H1 (cell line): ENCODE measurements at regions of chr13 and their contacts with region 1.

Region 1: DNA sequence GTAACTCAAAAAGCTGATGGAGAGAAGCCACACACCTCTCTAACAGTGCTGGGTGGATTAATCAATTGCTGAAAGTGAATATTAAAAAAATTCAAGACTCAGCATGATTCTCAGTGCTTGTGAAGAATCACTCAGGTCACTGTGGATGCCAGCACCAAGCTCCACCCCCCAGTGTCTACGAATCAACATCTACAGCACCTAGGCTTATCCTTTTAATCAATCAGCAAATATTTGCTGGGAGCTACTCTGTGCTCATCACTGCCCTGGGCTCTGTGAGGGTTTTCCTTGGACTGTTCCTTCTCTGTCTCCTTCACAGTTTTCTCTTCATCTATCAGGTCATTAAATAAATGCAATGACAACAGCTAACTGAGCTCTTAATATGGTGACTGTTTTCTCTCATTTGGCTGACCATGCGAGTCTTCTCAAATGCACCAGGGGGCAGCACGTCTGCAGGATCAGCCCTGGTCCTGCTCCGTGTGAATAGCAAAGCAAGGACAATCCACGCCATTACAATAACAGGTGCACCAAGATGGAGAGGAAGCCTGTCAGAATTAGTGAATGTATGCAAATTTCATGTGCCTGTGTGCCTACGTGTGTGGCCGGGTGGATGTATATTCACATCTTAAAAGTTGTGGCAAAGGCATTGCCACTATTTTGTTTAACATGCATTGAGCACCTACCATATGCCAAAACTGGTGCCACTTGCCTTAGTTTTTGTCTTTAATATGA is 14.6 kb upstream of the C13orf42 start:
- DNase-seq: peak; percentile 43 to 77
- H3K4me3 ChIP-seq: no peak overlapping the region
- H3K27ac ChIP-seq: no peak overlapping the region
- H3K4me1 ChIP-seq: peaks cover 0 to 19% (median 6%) of the 10 kb centered on the region in 4 experiments; a peak in 5 of 7 replicates
- H3K27me3 ChIP-seq: no peaks in the 10 kb centered on the region
- CTCF ChIP-seq: peak; percentile 85 to 96 (median 89)
- EP300 ChIP-seq: no peak
- POLR2A ChIP-seq: no peak
- RAD21 ChIP-seq: peak; percentile 94 to 95

Region 2: DNA sequence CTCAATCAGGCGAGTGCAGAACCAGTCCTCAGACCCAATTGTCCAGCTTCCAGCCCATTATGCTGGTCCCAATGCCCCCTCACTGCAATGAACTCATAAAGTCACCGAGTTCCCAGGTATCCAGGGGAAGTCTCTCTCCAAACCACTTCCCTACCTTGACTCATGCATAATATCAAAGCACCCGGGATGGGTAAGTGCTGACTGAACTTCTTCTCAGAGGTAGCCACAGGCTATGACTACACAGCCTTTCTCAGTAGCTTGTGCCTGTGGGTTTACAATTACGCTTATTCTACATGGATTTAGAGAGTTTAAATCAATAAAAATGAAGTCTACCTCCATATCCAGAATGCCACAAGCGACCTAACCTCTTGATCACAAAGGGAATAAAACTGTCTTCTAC is 12.9 kb before region 1 on chr13:
- CTCF ChIA-PET with region 1: interaction called, 24 read pairs
- POLR2A ChIA-PET with region 1: interaction called, 8 read pairs
- DNase-seq: no peak
- H3K4me3 ChIP-seq: no peak overlapping the region
- H3K27ac ChIP-seq: no peak overlapping the region
- H3K4me1 ChIP-seq: no peaks in the 10 kb centered on the region; a peak in 1 of 7 replicates
- H3K27me3 ChIP-seq: no peaks in the 10 kb centered on the region
- CTCF ChIP-seq: no peak
- EP300 ChIP-seq: no peak
- POLR2A ChIP-seq: no peak
- RAD21 ChIP-seq: no peak

Region 3: DNA sequence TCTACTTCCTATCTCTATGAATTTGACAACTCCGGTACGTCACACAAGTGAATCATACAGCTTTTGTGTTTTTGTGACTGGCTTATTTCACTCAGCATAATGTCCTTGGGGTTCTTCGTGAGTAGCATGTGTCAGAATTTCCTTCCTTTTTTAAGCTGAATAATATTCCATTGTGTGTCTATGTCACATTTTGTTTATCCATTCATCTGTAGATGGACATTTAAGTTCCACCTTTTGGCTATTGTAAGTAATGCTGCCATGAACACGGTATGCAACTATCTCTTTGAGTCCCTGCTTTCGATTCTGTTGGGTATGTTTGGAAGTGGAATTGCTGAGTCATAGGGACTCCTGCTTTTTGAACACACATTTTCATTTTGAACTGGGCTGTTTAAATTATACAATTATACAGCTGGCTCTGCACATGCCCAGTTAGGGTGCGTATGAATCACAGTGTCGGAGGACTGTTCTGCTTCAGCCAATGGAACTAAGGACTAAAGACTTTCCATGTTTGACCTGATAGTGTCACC is 28.4 kb after region 1 on chr13:
- CTCF ChIA-PET with region 1: interaction called, 102 read pairs
- POLR2A ChIA-PET with region 1: interaction called, 13 read pairs
- DNase-seq: peak in 1 of 2 experiments; percentile 31
- H3K4me3 ChIP-seq: no peak overlapping the region
- H3K27ac ChIP-seq: no peak overlapping the region
- H3K4me1 ChIP-seq: peaks cover 8 to 23% (median 18%) of the 10 kb centered on the region in 4 experiments; a peak in 6 of 7 replicates
- H3K27me3 ChIP-seq: no peaks in the 10 kb centered on the region
- CTCF ChIP-seq: no peak
- EP300 ChIP-seq: no peak
- POLR2A ChIP-seq: no peak
- RAD21 ChIP-seq: no peak

Region 4: DNA sequence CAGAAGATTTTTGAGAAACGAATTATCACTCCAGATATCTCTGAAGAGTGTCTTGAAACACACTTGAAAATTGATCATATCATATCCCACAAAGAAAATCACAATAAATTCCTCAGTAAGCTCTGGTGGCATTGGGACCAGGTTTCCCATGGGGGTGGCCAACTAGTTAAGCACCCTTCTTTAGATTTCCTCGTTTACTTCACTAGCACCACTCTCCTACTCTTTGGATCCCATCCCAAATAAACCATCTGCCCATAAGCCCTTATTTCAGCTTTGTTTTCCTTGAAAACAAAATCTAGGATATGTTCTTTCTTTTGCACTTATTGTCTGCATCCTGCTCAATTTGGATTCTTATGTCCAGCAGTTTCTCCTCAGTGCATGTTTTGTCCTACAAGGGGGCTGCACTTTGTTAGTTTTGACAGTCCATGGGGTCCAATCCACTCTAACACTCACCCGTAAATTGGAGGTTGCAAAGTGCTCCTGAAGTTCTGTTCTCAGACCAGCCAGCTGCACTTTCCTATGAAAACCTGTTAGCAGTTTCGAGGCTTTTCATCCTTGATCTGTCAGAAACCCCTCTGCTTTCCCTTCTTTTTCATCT is 56.2 kb after region 1 on chr13:
- CTCF ChIA-PET with region 1: interaction called, 11 read pairs
- POLR2A ChIA-PET with region 1: interaction called, 59 read pairs
- DNase-seq: no peak
- H3K4me3 ChIP-seq: no peak overlapping the region
- H3K27ac ChIP-seq: no peak overlapping the region
- H3K4me1 ChIP-seq: peaks cover 0 to 4% (median 1%) of the 10 kb centered on the region in 4 experiments; a peak in 2 of 7 replicates
- H3K27me3 ChIP-seq: no peaks in the 10 kb centered on the region
- CTCF ChIP-seq: no peak
- EP300 ChIP-seq: no peak
- POLR2A ChIP-seq: peak; percentile 6 to 45
- RAD21 ChIP-seq: no peak

Region 5: GRCh38 chr13:51230477-51231105 is 104.9 kb after region 1 on chr13:
- CTCF ChIA-PET with region 1: interaction called, 22 read pairs
- POLR2A ChIA-PET with region 1: no interaction called
- DNase-seq: no peak
- H3K4me3 ChIP-seq: no peak overlapping the region
- H3K27ac ChIP-seq: no peak overlapping the region
- H3K4me1 ChIP-seq: peaks cover 6 to 31% (median 18%) of the 10 kb centered on the region in 4 experiments
- H3K27me3 ChIP-seq: no peaks in the 10 kb centered on the region
- CTCF ChIP-seq: no peak
- EP300 ChIP-seq: no peak
- POLR2A ChIP-seq: no peak
- RAD21 ChIP-seq: no peak

Region 6: GRCh38 chr13:51303063-51303552 is 177.4 kb after region 1 on chr13:
- CTCF ChIA-PET with region 1: interaction called, 12 read pairs
- POLR2A ChIA-PET with region 1: no interaction called
- DNase-seq: peak in 1 of 2 experiments; percentile 75
- H3K4me3 ChIP-seq: peak overlapping the region in 1 of 4 experiments; percentile 23; a peak in 1 of 8 replicates
- H3K27ac ChIP-seq: peak overlapping the region; percentile 33; the same call in 1 of the 2 replicates
- H3K4me1 ChIP-seq: peaks cover 11 to 32% (median 28%) of the 10 kb centered on the region in 4 experiments
- H3K27me3 ChIP-seq: no peaks in the 10 kb centered on the region
- CTCF ChIP-seq: no peak
- EP300 ChIP-seq: peak in 1 of 2 experiments; percentile 65; a peak in 1 of 3 replicates
- POLR2A ChIP-seq: no peak
- RAD21 ChIP-seq: no peak; a peak in 1 of 4 replicates